CD14-positive monocyte (primary cell): ENCODE measurements at regions of chr16 and their contacts with region 1.

Region 1: GRCh38 chr16:80804056-80804450 is 345 bp downstream of the CDYL2 start:
- DNase-seq: peak; percentile 22 to 37 (median 28)
- H3K4me3 ChIP-seq: peak overlapping the region; percentile 43 to 82 (median 73)
- H3K4me3 Mint-ChIP-seq: peak overlapping the region; percentile 99
- H3K27ac ChIP-seq: no peak overlapping the region
- H3K27ac Mint-ChIP-seq: peak overlapping the region; percentile 33 to 94 (median 86)
- H3K4me1 ChIP-seq: peaks cover 30 to 33% of the 10 kb centered on the region in 2 donors
- H3K4me1 Mint-ChIP-seq: peaks cover 14% of the 10 kb centered on the region
- H3K27me3 ChIP-seq: peaks cover 6 to 12% of the 10 kb centered on the region in 2 donors
- H3K27me3 Mint-ChIP-seq: peaks cover 8 to 14% (median 11%) of the 10 kb centered on the region in 3 donors
- CTCF ChIP-seq: no peak

Region 2: GRCh38 chr16:80540516-80541272 is 263.4 kb before region 1 on chr16 and contains the start of gene DYNLRB2:
- intact Hi-C with region 1: loop called (anchors 2 to 5 kb)
- DNase-seq: peak; percentile 91 to 93 (median 91)
- H3K4me3 ChIP-seq: peak within 1 kb of the TSS; percentile 73 to 90 (median 85)
- H3K4me3 Mint-ChIP-seq: peak within 1 kb of the TSS; percentile 86 to 93
- H3K27ac ChIP-seq: peak within 1 kb of the TSS; percentile 34 to 84
- H3K27ac Mint-ChIP-seq: peak within 1 kb of the TSS; percentile 90 to 97 (median 92)
- H3K4me1 ChIP-seq: peaks cover 11 to 12% of the 10 kb centered on the region in 2 donors
- H3K4me1 Mint-ChIP-seq: peaks cover 15% of the 10 kb centered on the region
- H3K27me3 ChIP-seq: peaks cover 0 to 4% of the 10 kb centered on the region in 2 donors
- H3K27me3 Mint-ChIP-seq: peaks cover 4 to 11% (median 10%) of the 10 kb centered on the region in 3 donors
- CTCF ChIP-seq: no peak
- polyA plus RNA-seq, gene DYNLRB2: not detected

Region 3: DNA sequence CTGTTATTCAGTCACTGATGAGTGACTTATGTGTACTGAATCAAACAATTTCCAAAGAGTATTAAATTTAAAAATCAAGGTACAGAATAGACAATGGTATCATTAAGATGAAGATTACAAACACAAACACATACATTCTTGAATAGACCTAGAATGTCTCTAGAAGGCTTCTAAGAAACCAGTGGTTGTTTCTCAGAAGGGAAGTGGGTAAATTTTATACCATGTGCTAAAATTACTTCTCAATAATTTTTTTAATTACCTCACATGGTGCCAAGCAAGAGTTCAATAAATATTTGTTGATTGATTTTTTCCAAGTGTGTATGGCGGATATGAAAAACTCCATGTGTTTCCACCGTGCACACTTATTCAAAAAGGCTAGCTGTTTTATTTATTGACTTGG is 256.9 kb before region 1 on chr16:
- intact Hi-C with region 1: loop called in 1 of 2 experiments (anchors 5 kb)
- DNase-seq: no peak
- H3K4me3 ChIP-seq: no peak overlapping the region
- H3K4me3 Mint-ChIP-seq: no peak overlapping the region
- H3K27ac ChIP-seq: no peak overlapping the region
- H3K27ac Mint-ChIP-seq: no peak overlapping the region
- H3K4me1 ChIP-seq: no peaks in the 10 kb centered on the region
- H3K4me1 Mint-ChIP-seq: peaks cover 9% of the 10 kb centered on the region
- H3K27me3 ChIP-seq: peaks cover 0 to 2% of the 10 kb centered on the region in 2 donors
- H3K27me3 Mint-ChIP-seq: peaks cover 1 to 2% (median 2%) of the 10 kb centered on the region in 3 donors
- CTCF ChIP-seq: no peak

Region 4: GRCh38 chr16:80759419-80760162 is 44.5 kb before region 1 on chr16:
- intact Hi-C with region 1: no loop called
- DNase-seq: no peak
- H3K4me3 ChIP-seq: no peak overlapping the region
- H3K4me3 Mint-ChIP-seq: no peak overlapping the region
- H3K27ac ChIP-seq: no peak overlapping the region
- H3K27ac Mint-ChIP-seq: no peak overlapping the region
- H3K4me1 ChIP-seq: no peaks in the 10 kb centered on the region
- H3K4me1 Mint-ChIP-seq: no peaks in the 10 kb centered on the region
- H3K27me3 ChIP-seq: no peaks in the 10 kb centered on the region
- H3K27me3 Mint-ChIP-seq: no peaks in the 10 kb centered on the region
- CTCF ChIP-seq: no peak

Region 5: DNA sequence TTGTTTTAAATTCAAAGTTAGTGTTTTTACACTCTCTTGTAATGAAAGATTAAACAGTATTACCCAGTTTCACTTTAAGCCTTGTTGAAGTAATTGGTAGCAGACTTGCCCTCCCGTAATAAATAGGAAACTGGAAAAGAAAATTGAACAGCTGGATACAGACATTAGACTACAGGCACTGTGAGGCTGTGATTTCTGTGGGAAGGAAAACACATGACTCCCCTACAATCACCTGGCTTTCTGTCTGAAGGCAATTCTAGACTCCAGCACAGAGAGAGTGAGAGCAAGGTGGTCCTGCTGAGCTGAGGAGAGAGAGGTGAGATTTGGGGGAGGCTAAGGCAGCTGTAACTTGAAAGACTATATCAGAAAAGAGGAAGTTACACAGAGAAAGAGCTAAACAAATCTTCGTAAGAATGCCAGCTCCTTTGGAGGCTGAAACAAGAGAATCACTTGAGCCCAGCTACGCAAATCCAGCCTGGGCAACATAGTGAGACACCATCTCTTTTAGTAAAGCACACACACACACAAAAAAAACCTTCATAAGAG is 58.2 kb after region 1 on chr16:
- intact Hi-C with region 1: no loop called
- DNase-seq: no peak
- H3K4me3 ChIP-seq: no peak overlapping the region
- H3K4me3 Mint-ChIP-seq: peak overlapping the region in 1 of 2 donors; percentile 28
- H3K27ac ChIP-seq: no peak overlapping the region
- H3K27ac Mint-ChIP-seq: no peak overlapping the region
- H3K4me1 ChIP-seq: no peaks in the 10 kb centered on the region
- H3K4me1 Mint-ChIP-seq: no peaks in the 10 kb centered on the region
- H3K27me3 ChIP-seq: no peaks in the 10 kb centered on the region
- H3K27me3 Mint-ChIP-seq: peaks cover 6 to 7% (median 6%) of the 10 kb centered on the region in 3 donors
- CTCF ChIP-seq: no peak